CD4-positive, alpha-beta memory T cell (primary cell): ENCODE measurements at regions of chr3 and their contacts with region 1.

Region 1: DNA sequence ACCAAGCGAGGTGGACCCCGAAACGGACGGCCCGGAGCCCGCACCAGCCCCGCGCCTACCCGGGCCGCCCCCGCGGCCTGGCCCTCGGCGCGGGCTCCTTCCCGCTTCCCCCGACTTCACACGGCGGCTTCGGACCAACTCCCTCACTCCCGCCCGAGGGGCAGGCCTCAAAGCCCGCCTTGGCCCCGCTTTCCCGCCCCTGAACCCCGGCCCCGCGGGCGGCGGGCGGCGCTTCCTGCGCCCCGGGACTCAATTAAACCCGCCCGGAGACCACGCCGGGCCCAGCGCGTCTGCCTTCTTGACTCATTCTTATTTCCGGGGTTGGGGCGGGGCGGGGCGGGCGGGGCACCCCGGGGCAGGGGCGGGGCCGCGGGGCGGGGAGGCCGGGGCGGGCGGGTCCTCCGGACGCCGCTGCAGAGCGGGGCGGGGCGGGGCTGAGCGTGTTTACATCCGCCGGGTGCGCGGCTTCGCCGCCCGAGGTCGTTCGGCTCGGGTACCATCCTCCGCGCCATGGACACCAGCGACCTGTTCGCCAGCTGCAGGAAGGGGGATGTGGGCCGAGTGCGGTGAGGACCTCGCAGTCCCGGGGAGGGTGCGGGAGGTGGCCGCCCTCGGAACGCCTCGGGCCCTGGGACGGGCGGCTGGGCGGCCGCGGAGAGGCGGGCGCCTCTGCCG is at the start of gene ABTB1:
- DNase-seq: peak; percentile 79 to 86 (median 85)
- H3K4me3 ChIP-seq: peak within 1 kb of the TSS; percentile 61 to 80
- H3K4me3 Mint-ChIP-seq: peak within 1 kb of the TSS; percentile 88 to 94 (median 92)
- H3K27ac ChIP-seq: peak within 1 kb of the TSS; percentile 86
- H3K27ac Mint-ChIP-seq: peak within 1 kb of the TSS; percentile 90 to 98 (median 94)
- H3K4me1 ChIP-seq: peaks cover 31% of the 10 kb centered on the region
- H3K4me1 Mint-ChIP-seq: peaks cover 18 to 41% (median 28%) of the 10 kb centered on the region in 4 donors
- H3K27me3 ChIP-seq: no peaks in the 10 kb centered on the region
- H3K27me3 Mint-ChIP-seq: no peaks in the 10 kb centered on the region
- total RNA-seq, gene ABTB1: 167 to 169 TPM

Region 2: GRCh38 chr3:126475413-126476114 is 1197.1 kb before region 1 on chr3 and contains the start of gene ZXDC:
- CTCF ChIA-PET with region 1: no interaction called
- POLR2A ChIA-PET with region 1: interaction called, 3 read pairs
- intact Hi-C with region 1: loop called (anchors 5 kb)
- DNase-seq: peak; percentile 90 to 93 (median 92)
- H3K4me3 ChIP-seq: peak within 1 kb of the TSS; percentile 60 to 73
- H3K4me3 Mint-ChIP-seq: peak within 1 kb of the TSS; percentile 87 to 94 (median 92)
- H3K27ac ChIP-seq: peak within 1 kb of the TSS; percentile 64
- H3K27ac Mint-ChIP-seq: peak within 1 kb of the TSS; percentile 83 to 98 (median 92)
- H3K4me1 ChIP-seq: peaks cover 36% of the 10 kb centered on the region
- H3K4me1 Mint-ChIP-seq: peaks cover 30 to 55% (median 44%) of the 10 kb centered on the region in 4 donors
- H3K27me3 ChIP-seq: no peaks in the 10 kb centered on the region
- H3K27me3 Mint-ChIP-seq: no peaks in the 10 kb centered on the region
- total RNA-seq, gene ZXDC: 58.2 to 66.3 TPM

Region 3: DNA sequence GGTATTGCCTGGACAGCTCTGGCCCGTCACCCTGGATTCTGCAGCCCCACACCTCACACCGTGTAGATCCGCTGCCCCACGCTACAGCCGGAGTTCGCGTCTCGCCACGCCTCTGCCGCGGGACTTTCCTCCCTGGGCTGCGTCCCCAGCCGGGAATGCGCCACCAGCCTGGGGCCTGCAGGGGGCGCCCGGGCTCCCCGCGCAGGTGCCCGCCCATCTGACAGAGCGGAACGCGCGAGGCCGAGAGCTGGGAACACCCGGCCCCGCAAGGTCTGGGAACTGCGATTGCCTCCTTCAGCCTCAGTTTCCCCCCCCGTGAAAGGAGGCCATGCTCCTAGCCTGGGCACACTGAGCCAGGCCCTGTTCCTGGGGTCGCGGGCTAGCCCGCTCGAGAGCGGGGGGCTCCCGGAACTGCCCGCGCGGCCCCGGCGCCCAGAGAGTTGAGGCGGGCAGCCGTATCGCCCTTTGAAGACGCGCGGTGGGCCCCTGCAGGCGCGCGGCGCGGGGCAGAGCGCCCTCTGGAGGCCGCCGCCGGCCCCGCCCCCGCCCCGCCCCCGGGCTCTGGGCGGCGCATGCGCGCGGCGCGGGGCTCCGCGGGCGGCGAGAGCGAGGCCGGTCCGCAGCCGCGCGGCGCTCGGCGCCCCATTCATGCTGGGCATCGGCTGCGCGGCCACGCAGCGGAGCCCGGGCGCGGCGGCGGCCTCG is 690.0 kb before region 1 on chr3 and contains the start of gene PLXNA1:
- CTCF ChIA-PET with region 1: no interaction called
- POLR2A ChIA-PET with region 1: no interaction called
- intact Hi-C with region 1: loop called (anchors 2 kb)
- DNase-seq: peak; percentile 88 to 97 (median 95)
- H3K4me3 ChIP-seq: peak within 1 kb of the TSS; percentile 61 to 76
- H3K4me3 Mint-ChIP-seq: peak within 1 kb of the TSS; percentile 84 to 92 (median 89)
- H3K27ac ChIP-seq: peak within 1 kb of the TSS; percentile 83
- H3K27ac Mint-ChIP-seq: peak within 1 kb of the TSS; percentile 95 to 98 (median 97)
- H3K4me1 ChIP-seq: peaks cover 17% of the 10 kb centered on the region
- H3K4me1 Mint-ChIP-seq: peaks cover 6 to 29% (median 17%) of the 10 kb centered on the region in 4 donors
- H3K27me3 ChIP-seq: no peaks in the 10 kb centered on the region
- H3K27me3 Mint-ChIP-seq: peaks cover 5 to 7% of the 10 kb centered on the region in 2 donors
- total RNA-seq, gene PLXNA1: 18.9 to 21.3 TPM

Region 4: GRCh38 chr3:127590593-127591477 is 81.8 kb before region 1 on chr3 and contains the start of gene TPRA1:
- CTCF ChIA-PET with region 1: interaction called, 4 read pairs
- POLR2A ChIA-PET with region 1: interaction called, 29 read pairs
- intact Hi-C with region 1: loop called (anchors 2 kb)
- DNase-seq: peak; percentile 83 to 90 (median 88)
- H3K4me3 ChIP-seq: peak within 1 kb of the TSS; percentile 81 to 83
- H3K4me3 Mint-ChIP-seq: peak within 1 kb of the TSS; percentile 96 to 100 (median 98)
- H3K27ac ChIP-seq: peak within 1 kb of the TSS; percentile 73
- H3K27ac Mint-ChIP-seq: peak within 1 kb of the TSS; percentile 93 to 98 (median 96)
- H3K4me1 ChIP-seq: peaks cover 26% of the 10 kb centered on the region
- H3K4me1 Mint-ChIP-seq: peaks cover 16 to 50% (median 36%) of the 10 kb centered on the region in 4 donors
- H3K27me3 ChIP-seq: no peaks in the 10 kb centered on the region
- H3K27me3 Mint-ChIP-seq: no peaks in the 10 kb centered on the region
- total RNA-seq, gene TPRA1: 28.3 to 29.7 TPM

Region 5: GRCh38 chr3:127628788-127629466 is 43.7 kb before region 1 on chr3 and contains the start of gene PODXL2:
- CTCF ChIA-PET with region 1: no interaction called
- POLR2A ChIA-PET with region 1: interaction called, 8 read pairs
- intact Hi-C with region 1: loop called (anchors 1 kb)
- DNase-seq: peak in 4 of 5 donors; percentile 34 to 51 (median 36)
- H3K4me3 ChIP-seq: peak within 1 kb of the TSS; percentile 44 to 67
- H3K4me3 Mint-ChIP-seq: peak within 1 kb of the TSS; percentile 85 to 94 (median 89)
- H3K27ac ChIP-seq: no peak within 1 kb of the TSS
- H3K27ac Mint-ChIP-seq: peak within 1 kb of the TSS; percentile 78 to 91 (median 89)
- H3K4me1 ChIP-seq: peaks cover 21% of the 10 kb centered on the region
- H3K4me1 Mint-ChIP-seq: peaks cover 29 to 53% (median 37%) of the 10 kb centered on the region in 4 donors
- H3K27me3 ChIP-seq: peaks cover 4% of the 10 kb centered on the region
- H3K27me3 Mint-ChIP-seq: peaks cover 10 to 14% of the 10 kb centered on the region in 2 donors
- total RNA-seq, gene PODXL2: 3.3 to 4.2 TPM

Region 6: GRCh38 chr3:127697551-127698240 is 25.0 kb after region 1 on chr3:
- CTCF ChIA-PET with region 1: interaction called, 3 read pairs
- POLR2A ChIA-PET with region 1: interaction called, 16 read pairs
- intact Hi-C with region 1: no loop called
- DNase-seq: peak; percentile 35 to 54 (median 50)
- H3K4me3 ChIP-seq: no peak overlapping the region
- H3K4me3 Mint-ChIP-seq: peak overlapping the region in 3 of 8 donors; percentile 17 to 68 (median 65)
- H3K27ac ChIP-seq: no peak overlapping the region
- H3K27ac Mint-ChIP-seq: peak overlapping the region in 2 of 7 donors; percentile 4 to 20
- H3K4me1 ChIP-seq: no peaks in the 10 kb centered on the region
- H3K4me1 Mint-ChIP-seq: peaks cover 0 to 4% (median 2%) of the 10 kb centered on the region in 4 donors
- H3K27me3 ChIP-seq: no peaks in the 10 kb centered on the region
- H3K27me3 Mint-ChIP-seq: peaks cover 1 to 2% of the 10 kb centered on the region in 2 donors